Activated B cell treated with CpG ODN at 0.5 μM for 24 hours (primary cell): ENCODE measurements at regions of chr15 and their contacts with region 1.

Region 1: GRCh38 chr15:92808978-92809879 is 90.9 kb upstream of the CHD2 start:
- DNase-seq: peak; percentile 99
- ATAC-seq: peak; percentile 83
- H3K4me3 Mint-ChIP-seq: peak overlapping the region; percentile 91
- H3K27ac Mint-ChIP-seq: peak overlapping the region; percentile 98
- H3K4me1 Mint-ChIP-seq: peaks cover 37% of the 10 kb centered on the region
- H3K27me3 Mint-ChIP-seq: no peaks in the 10 kb centered on the region
- CTCF ChIP-seq: peak; percentile 81

Region 2: DNA sequence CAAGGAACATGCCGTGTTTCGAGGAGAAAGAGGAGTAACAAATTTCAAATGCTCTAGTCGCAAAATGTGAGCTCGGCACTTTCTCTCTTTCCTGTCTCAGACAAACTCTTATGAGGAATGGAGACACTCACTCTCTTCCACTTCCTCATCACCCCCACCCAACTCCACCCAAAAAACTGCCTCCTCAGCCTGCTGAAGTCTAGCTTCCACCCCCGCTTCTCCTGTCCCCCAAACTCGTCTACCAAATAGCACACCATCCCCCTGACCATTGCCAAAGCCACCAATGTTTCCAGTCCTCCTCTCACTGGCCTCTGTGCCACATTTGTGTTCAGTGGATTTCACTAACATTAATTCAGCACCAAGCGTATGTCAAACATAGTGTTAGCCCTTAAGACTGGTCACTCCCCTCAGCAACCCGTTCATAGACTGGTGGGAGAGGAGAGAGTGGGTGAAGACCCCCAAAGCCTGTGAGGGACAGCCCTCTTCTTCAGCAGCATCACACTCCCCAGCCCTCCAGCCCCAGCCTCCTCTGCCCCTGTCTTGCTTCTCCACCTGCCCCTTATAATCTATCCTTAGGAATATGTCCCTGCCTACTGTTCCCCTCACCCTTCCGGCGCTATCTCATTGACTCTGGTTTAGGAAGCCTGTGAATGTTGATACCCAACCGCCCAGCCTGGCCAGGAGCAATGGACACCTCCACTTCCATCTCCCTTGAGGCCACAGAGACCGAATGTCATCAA is 231.0 kb before region 1 on chr15:
- CTCF ChIA-PET with region 1: no interaction called
- POLR2A ChIA-PET with region 1: no interaction called
- intact Hi-C with region 1: no loop called
- DNase-seq: no peak
- ATAC-seq: no peak
- H3K4me3 Mint-ChIP-seq: no peak overlapping the region
- H3K27ac Mint-ChIP-seq: no peak overlapping the region
- H3K4me1 Mint-ChIP-seq: no peaks in the 10 kb centered on the region
- H3K27me3 Mint-ChIP-seq: peaks cover 7% of the 10 kb centered on the region
- CTCF ChIP-seq: no peak

Region 3: DNA sequence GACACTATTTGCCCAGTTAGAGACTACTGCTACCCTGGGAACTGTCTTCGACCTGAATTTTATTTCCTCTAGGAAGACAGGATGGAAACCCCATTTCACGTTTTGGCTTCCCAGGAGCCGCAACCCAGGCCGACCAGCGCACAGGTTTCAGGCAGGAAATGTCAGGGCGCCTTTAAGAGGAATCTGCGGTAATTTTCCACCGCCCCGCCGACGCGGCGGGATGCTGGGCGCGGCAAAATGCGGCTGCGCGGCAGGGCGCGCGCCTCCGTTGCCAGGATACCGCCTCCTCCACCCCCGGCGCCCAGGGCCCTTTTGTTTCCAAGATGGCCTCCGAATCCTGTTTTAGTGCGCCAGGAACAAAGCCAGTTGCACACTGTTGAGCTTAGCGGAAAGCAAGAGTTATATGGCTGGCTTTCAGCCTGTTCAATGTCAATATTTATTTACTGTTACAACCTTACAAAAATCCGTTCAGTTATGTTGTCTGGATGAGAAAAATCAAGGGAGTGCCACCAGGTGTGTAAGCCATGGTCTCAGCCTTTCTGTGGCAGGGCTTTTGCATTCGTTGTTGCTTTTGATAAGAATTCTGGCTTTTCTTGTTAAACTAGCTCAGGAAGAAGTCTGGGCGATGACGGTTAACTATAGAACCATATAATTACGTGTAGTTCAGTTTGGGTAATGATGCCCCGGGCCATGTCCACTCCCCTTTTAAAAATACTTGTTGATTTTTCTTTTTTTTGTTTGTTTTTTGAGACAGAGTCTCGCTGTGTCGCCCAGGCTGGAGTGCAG is 11.2 kb after region 1 on chr15:
- CTCF ChIA-PET with region 1: interaction called, 7 read pairs
- POLR2A ChIA-PET with region 1: interaction called, 76 read pairs
- intact Hi-C with region 1: loop called (anchors 1 kb)
- DNase-seq: peak; percentile 82
- ATAC-seq: peak; percentile 79
- H3K4me3 Mint-ChIP-seq: peak overlapping the region; percentile 90
- H3K27ac Mint-ChIP-seq: peak overlapping the region; percentile 90
- H3K4me1 Mint-ChIP-seq: peaks cover 62% of the 10 kb centered on the region
- H3K27me3 Mint-ChIP-seq: no peaks in the 10 kb centered on the region
- CTCF ChIP-seq: no peak

Region 4: GRCh38 chr15:92839696-92840095 is 30.5 kb after region 1 on chr15:
- CTCF ChIA-PET with region 1: no interaction called
- POLR2A ChIA-PET with region 1: interaction called, 261 read pairs
- intact Hi-C with region 1: no loop called
- DNase-seq: no peak
- ATAC-seq: peak; percentile 70
- H3K4me3 Mint-ChIP-seq: peak overlapping the region; percentile 45
- H3K27ac Mint-ChIP-seq: peak overlapping the region; percentile 85
- H3K4me1 Mint-ChIP-seq: peaks cover 37% of the 10 kb centered on the region
- H3K27me3 Mint-ChIP-seq: no peaks in the 10 kb centered on the region
- CTCF ChIP-seq: no peak

Region 5: GRCh38 chr15:92881802-92882696 is 72.8 kb after region 1 on chr15:
- CTCF ChIA-PET with region 1: interaction called, 38 read pairs
- POLR2A ChIA-PET with region 1: interaction called, 599 read pairs
- intact Hi-C with region 1: loop called (anchors 1 kb)
- DNase-seq: peak; percentile 91
- ATAC-seq: peak; percentile 90
- H3K4me3 Mint-ChIP-seq: peak overlapping the region; percentile 88
- H3K27ac Mint-ChIP-seq: peak overlapping the region; percentile 99
- H3K4me1 Mint-ChIP-seq: peaks cover 46% of the 10 kb centered on the region
- H3K27me3 Mint-ChIP-seq: no peaks in the 10 kb centered on the region
- CTCF ChIP-seq: no peak

Region 6: DNA sequence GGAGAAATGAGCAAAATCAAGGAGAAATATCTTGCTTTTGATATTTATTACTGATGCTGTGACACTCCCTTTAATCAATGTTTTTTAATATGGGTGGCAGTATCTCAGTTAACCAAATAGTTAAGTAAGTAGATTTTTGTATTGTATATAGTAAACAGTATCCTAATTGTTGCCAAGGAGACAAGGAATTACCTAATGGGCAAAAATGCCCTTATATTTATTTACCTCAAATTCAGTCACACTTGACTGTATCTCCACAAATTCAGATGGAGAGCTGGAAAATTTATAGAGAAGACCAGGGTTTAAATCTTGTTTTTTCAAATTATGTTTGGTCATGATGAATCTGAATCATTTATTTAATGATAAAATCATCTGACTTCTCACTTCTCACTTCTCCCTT is 87.3 kb after region 1 on chr15:
- CTCF ChIA-PET with region 1: interaction called, 33 read pairs
- POLR2A ChIA-PET with region 1: interaction called, 446 read pairs
- intact Hi-C with region 1: loop called (anchors 1 kb)
- DNase-seq: no peak
- ATAC-seq: no peak
- H3K4me3 Mint-ChIP-seq: no peak overlapping the region
- H3K27ac Mint-ChIP-seq: peak overlapping the region; percentile 79
- H3K4me1 Mint-ChIP-seq: peaks cover 51% of the 10 kb centered on the region
- H3K27me3 Mint-ChIP-seq: no peaks in the 10 kb centered on the region
- CTCF ChIP-seq: no peak

Region 7: GRCh38 chr15:93428135-93428534 is 618.9 kb after region 1 on chr15:
- CTCF ChIA-PET with region 1: no interaction called
- POLR2A ChIA-PET with region 1: no interaction called
- intact Hi-C with region 1: no loop called
- DNase-seq: no peak
- ATAC-seq: no peak
- H3K4me3 Mint-ChIP-seq: no peak overlapping the region
- H3K27ac Mint-ChIP-seq: no peak overlapping the region
- H3K4me1 Mint-ChIP-seq: no peaks in the 10 kb centered on the region
- H3K27me3 Mint-ChIP-seq: no peaks in the 10 kb centered on the region
- CTCF ChIP-seq: no peak

Region 8: GRCh38 chr15:93610944-93611343 is 801.7 kb after region 1 on chr15:
- CTCF ChIA-PET with region 1: no interaction called
- POLR2A ChIA-PET with region 1: no interaction called
- intact Hi-C with region 1: no loop called
- DNase-seq: no peak
- ATAC-seq: no peak
- H3K4me3 Mint-ChIP-seq: no peak overlapping the region
- H3K27ac Mint-ChIP-seq: no peak overlapping the region
- H3K4me1 Mint-ChIP-seq: no peaks in the 10 kb centered on the region
- H3K27me3 Mint-ChIP-seq: no peaks in the 10 kb centered on the region
- CTCF ChIP-seq: no peak